ENCODE measurements at regions of chr14 and their contacts with region 1.

Region 1: GRCh38 chr14:61178226-61179060 is 102.7 kb downstream of the TMEM30B start:
- DNase-seq: peak; percentile 85
- ATAC-seq: peak; percentile 82
- H3K4me3 Mint-ChIP-seq: peak overlapping the region; percentile 38
- H3K27ac Mint-ChIP-seq: peak overlapping the region; percentile 88
- H3K4me1 Mint-ChIP-seq: peaks cover 52% of the 10 kb centered on the region
- H3K27me3 Mint-ChIP-seq: peaks cover 4% of the 10 kb centered on the region

Region 2: DNA sequence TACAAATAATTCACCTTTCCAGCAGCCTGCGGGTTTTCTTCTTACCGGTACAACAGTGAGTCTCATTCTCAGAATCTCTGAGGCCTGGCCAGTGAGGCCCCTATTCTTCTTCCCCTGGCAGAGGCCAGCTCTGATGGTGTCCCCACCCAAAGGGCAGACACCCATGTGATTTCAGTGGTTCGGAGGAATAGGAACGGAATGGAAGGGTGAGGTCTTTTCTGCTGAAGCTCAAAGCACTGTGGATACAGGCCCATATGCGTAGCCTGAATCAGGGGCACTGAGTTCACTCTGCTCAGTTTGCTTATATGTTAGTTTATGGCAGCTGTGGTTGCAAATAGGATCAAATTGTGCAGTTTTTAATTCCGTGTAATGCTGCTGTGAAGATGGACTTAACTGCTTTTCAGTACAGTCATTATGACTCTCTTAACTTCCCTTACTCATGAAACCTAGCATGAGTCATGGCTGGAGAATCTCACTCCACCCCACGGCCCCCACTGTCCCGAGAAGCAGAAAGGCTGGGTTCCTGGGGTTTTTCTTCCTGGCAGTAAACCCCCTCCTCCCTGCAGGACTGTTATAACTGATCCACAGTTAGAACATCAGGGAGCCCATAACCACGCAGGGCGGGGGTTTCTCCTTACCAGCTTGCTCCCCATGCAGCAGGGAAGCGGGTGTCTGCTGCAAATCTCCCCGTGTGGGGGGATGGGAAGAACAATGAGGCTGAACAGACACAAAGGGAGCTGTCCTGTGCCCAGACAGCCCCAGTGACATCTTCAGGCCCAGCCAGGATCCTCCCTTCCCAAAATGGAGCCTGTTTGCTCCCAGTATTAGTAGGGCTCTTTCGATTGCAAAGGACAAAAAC is 74.7 kb before region 1 on chr14:
- CTCF ChIA-PET with region 1: no interaction called
- POLR2A ChIA-PET with region 1: no interaction called
- intact Hi-C with region 1: loop called (anchors 1 kb)
- DNase-seq: peak; percentile 62
- ATAC-seq: peak; percentile 82
- H3K4me3 Mint-ChIP-seq: no peak overlapping the region
- H3K27ac Mint-ChIP-seq: peak overlapping the region; percentile 29
- H3K4me1 Mint-ChIP-seq: peaks cover 24% of the 10 kb centered on the region
- H3K27me3 Mint-ChIP-seq: no peaks in the 10 kb centered on the region

Region 3: DNA sequence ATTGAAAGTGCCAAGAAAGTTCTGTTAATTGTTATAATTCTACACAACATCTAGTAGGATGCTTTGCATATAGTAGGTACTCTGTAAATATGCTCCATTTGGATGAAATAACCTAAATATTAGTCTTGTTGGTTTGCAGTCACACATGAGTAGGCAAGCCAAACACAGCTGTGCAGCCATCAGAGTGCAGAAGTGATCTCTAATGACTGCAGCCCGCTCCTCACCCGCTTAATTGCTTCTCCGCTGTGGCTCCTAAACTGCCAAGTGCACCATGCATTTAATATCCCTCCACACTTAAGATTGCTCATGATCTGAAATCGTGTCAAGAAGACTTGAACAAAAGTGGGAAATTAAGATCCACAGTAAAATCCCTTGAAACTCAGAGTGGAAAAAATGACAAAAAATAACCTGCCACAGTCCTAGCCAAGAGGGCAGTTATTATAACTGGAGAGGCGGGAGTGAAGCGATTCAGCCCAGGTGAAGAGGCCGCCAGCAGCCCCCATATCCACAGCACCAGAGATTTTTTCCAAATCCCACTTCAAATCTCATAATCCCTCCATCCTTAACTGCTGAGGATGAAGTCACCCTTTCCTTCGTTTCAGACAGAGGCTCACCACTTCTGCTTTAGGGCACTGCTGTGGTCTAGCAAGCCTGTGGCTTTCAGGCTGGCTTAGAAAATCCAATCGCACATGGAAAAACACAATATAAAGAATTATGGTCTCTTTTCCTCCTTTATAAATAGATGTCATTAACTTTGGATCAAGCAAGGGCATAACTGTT is 33.2 kb after region 1 on chr14:
- CTCF ChIA-PET with region 1: no interaction called
- POLR2A ChIA-PET with region 1: no interaction called
- intact Hi-C with region 1: no loop called
- DNase-seq: no peak
- ATAC-seq: no peak
- H3K4me3 Mint-ChIP-seq: no peak overlapping the region
- H3K27ac Mint-ChIP-seq: no peak overlapping the region
- H3K4me1 Mint-ChIP-seq: peaks cover 2% of the 10 kb centered on the region
- H3K27me3 Mint-ChIP-seq: peaks cover 16% of the 10 kb centered on the region

Region 4: GRCh38 chr14:61271552-61271951 is 93.1 kb after region 1 on chr14:
- CTCF ChIA-PET with region 1: no interaction called
- POLR2A ChIA-PET with region 1: no interaction called
- intact Hi-C with region 1: no loop called
- DNase-seq: no peak
- ATAC-seq: no peak
- H3K4me3 Mint-ChIP-seq: no peak overlapping the region
- H3K27ac Mint-ChIP-seq: no peak overlapping the region
- H3K4me1 Mint-ChIP-seq: peaks cover 2% of the 10 kb centered on the region
- H3K27me3 Mint-ChIP-seq: peaks cover 21% of the 10 kb centered on the region

Region 5: DNA sequence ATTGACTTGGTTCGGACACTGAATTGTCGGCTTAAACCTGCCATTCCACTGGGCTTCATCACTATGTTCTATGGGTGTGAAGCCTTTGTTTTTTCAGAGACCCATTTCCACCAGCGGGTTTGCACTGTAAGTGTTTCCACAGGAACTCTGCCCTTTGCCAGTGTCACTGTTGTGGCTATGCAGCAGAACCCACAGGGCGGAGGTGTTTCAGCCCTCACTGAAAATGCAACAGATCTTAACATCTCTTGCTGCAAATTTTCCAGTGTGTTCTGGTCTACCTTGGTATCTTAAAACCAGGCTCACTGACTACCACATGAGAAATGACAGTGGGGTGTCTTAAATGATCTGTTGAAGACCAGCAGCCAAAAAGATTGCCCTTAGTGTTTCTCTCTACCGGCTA is 164.0 kb after region 1 on chr14:
- CTCF ChIA-PET with region 1: no interaction called
- POLR2A ChIA-PET with region 1: no interaction called
- intact Hi-C with region 1: loop called in 1 of 2 experiments (anchors 5 kb)
- DNase-seq: peak; percentile 91
- ATAC-seq: peak; percentile 60
- H3K4me3 Mint-ChIP-seq: peak overlapping the region; percentile 86
- H3K27ac Mint-ChIP-seq: peak overlapping the region; percentile 99
- H3K4me1 Mint-ChIP-seq: peaks cover 94% of the 10 kb centered on the region
- H3K27me3 Mint-ChIP-seq: no peaks in the 10 kb centered on the region